Caco-2 (cell line): ENCODE measurements at regions of chr4 and their contacts with region 1.

Region 1: GRCh38 chr4:74189331-74190043 is 31.6 kb downstream of the MTHFD2L start:
- DNase-seq: peak in 1 of 2 experiments; percentile 45
- H3K4me3 ChIP-seq: no peak overlapping the region
- H3K4me3 Mint-ChIP-seq: no peak overlapping the region
- H3K27ac Mint-ChIP-seq: no peak overlapping the region
- H3K4me1 ChIP-seq: no peaks in the 10 kb centered on the region; the same call in 1 of the 2 replicates
- H3K4me1 Mint-ChIP-seq: no peaks in the 10 kb centered on the region
- H3K27me3 ChIP-seq: no peaks in the 10 kb centered on the region
- H3K27me3 Mint-ChIP-seq: no peaks in the 10 kb centered on the region
- CTCF ChIP-seq: peak; percentile 59 to 64

Region 2: GRCh38 chr4:74206088-74206825 is 16.8 kb after region 1 on chr4:
- CTCF ChIA-PET with region 1: no interaction called
- POLR2A ChIA-PET with region 1: no interaction called
- intact Hi-C with region 1: loop called (anchors 1 kb)
- DNase-seq: peak; percentile 33 to 51
- H3K4me3 ChIP-seq: no peak overlapping the region
- H3K4me3 Mint-ChIP-seq: peak overlapping the region; percentile 51
- H3K27ac Mint-ChIP-seq: peak overlapping the region; percentile 76
- H3K4me1 ChIP-seq: peaks cover 63% of the 10 kb centered on the region
- H3K4me1 Mint-ChIP-seq: peaks cover 46% of the 10 kb centered on the region
- H3K27me3 ChIP-seq: no peaks in the 10 kb centered on the region
- H3K27me3 Mint-ChIP-seq: no peaks in the 10 kb centered on the region
- CTCF ChIP-seq: no peak

Region 3: DNA sequence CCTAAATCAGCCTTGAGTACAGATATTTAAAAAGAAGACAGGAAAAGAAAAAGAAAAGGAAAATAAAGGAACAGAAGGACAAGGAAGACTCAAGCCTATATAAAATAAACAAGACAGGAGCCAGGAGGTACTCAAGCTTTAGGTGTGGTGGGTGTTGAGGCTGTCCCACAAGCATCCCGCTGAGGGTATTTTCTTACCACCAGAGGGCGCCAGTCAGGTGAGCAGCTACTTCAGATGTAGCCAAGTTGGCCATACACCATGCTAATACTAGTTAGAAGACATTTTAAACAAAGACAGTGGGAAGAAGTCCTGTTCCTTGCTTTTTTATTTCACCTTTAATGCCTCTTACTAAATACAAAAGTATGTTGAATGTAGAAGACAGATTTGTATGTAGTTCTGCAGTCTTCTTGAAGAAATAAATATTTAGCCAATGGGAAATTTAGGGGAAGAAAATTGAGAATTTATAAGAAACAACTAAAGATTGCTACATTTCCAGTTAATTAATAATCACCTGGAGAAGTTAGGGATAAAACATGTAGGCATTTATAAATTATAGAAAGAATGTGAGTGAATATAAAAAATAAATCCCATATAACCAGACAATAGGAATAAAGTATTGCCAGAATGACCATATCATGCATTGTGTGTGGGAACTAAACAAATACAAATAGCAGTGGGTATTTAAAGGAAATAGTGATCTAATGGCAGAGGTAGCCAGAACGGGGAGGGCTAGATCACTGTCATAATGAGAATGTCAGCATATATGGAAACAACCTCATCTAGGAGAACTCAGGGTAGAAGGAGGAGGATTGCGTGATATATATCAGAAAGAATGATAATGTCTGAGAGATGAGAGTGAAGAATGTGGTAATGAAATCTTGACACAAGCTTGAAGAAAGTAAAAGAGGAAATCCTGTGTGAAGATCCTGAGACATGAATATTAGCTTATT is 39.5 kb after region 1 on chr4:
- CTCF ChIA-PET with region 1: interaction called, 13 read pairs
- POLR2A ChIA-PET with region 1: no interaction called
- intact Hi-C with region 1: loop called (anchors 1 kb)
- DNase-seq: peak; percentile 77 to 83
- H3K4me3 ChIP-seq: no peak overlapping the region
- H3K4me3 Mint-ChIP-seq: no peak overlapping the region
- H3K27ac Mint-ChIP-seq: no peak overlapping the region
- H3K4me1 ChIP-seq: no peaks in the 10 kb centered on the region
- H3K4me1 Mint-ChIP-seq: no peaks in the 10 kb centered on the region
- H3K27me3 ChIP-seq: no peaks in the 10 kb centered on the region
- H3K27me3 Mint-ChIP-seq: no peaks in the 10 kb centered on the region
- CTCF ChIP-seq: peak; percentile 61 to 73

Region 4: DNA sequence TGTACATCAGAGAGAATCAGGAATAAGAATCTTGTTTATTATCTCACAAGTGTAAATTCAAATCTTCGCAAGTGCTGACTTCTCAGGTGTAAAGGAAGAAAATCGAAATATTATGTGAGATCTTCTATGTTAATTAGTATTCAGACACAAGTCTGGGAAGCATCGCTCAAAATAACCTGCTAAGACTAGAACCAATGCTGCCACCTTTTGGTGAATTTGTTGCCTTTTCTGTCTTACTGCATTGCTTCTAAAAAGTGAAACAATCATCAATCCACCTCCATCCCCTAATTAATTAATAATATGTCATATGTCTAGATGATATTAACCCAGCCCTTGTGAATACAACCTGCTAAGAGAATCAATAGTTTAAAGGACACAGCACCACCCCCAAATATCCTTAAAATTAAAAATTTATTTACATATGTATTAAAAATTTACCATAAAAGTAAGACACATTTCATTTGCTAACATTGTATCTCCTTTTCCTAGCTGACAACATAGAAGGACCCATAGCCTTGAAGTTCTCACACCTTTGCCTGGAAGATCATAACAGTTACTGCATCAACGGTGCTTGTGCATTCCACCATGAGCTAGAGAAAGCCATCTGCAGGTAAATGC is 122.3 kb after region 1 on chr4:
- CTCF ChIA-PET with region 1: interaction called, 8 read pairs
- POLR2A ChIA-PET with region 1: no interaction called
- intact Hi-C with region 1: loop called (anchors 1 kb)
- DNase-seq: peak; percentile 39 to 61
- H3K4me3 ChIP-seq: no peak overlapping the region
- H3K4me3 Mint-ChIP-seq: no peak overlapping the region
- H3K27ac Mint-ChIP-seq: no peak overlapping the region
- H3K4me1 ChIP-seq: no peaks in the 10 kb centered on the region
- H3K4me1 Mint-ChIP-seq: no peaks in the 10 kb centered on the region
- H3K27me3 ChIP-seq: no peaks in the 10 kb centered on the region
- H3K27me3 Mint-ChIP-seq: no peaks in the 10 kb centered on the region
- CTCF ChIP-seq: peak; percentile 58 to 60

Region 5: DNA sequence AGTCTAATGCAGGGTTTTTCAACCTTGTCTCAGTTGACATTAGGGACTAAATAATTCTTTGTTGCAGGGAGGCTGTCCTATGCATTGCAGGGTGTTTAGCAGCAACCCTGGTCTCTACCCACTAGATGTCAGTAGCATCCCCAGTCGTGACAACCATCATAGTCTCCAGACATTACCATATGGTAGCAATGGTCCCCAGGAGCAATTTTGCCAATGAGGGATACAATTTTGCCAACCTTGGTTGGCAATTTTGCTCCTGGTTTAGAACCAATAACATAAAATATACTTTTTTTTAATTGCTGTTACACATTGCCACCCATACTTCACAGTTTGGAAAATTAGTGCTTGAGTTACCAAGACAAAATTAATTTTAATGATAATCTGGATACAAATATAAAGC is 181.4 kb after region 1 on chr4:
- CTCF ChIA-PET with region 1: no interaction called
- POLR2A ChIA-PET with region 1: no interaction called
- intact Hi-C with region 1: loop called (anchors 5 kb)
- DNase-seq: peak; percentile 68 to 69
- H3K4me3 ChIP-seq: no peak overlapping the region
- H3K4me3 Mint-ChIP-seq: no peak overlapping the region
- H3K27ac Mint-ChIP-seq: no peak overlapping the region
- H3K4me1 ChIP-seq: peaks cover 15% of the 10 kb centered on the region; the same call in 1 of the 2 replicates
- H3K4me1 Mint-ChIP-seq: peaks cover 17% of the 10 kb centered on the region
- H3K27me3 ChIP-seq: no peaks in the 10 kb centered on the region
- H3K27me3 Mint-ChIP-seq: no peaks in the 10 kb centered on the region
- CTCF ChIP-seq: peak; percentile 73 to 81